Esophagus squamous epithelium (tissue), 5 donors: ENCODE measurements at regions of chr7 and their contacts with region 1.

Region 1: GRCh38 chr7:112550468-112551060 is 69.8 kb downstream of the LSMEM1 start:
- DNase-seq: no peak
- H3K4me3 ChIP-seq: no peak overlapping the region
- H3K27ac ChIP-seq: no peak overlapping the region
- H3K4me1 ChIP-seq: no peaks in the 10 kb centered on the region
- H3K27me3 ChIP-seq: peaks cover 0 to 7% (median 0%) of the 10 kb centered on the region in 4 donors
- CTCF ChIP-seq: peak; percentile 35 to 92 (median 82)
- POLR2A ChIP-seq: no peak

Region 2: GRCh38 chr7:112610636-112611035 is 60.1 kb after region 1 on chr7:
- intact Hi-C with region 1: no loop called
- DNase-seq: no peak
- H3K4me3 ChIP-seq: no peak overlapping the region
- H3K27ac ChIP-seq: no peak overlapping the region
- H3K4me1 ChIP-seq: no peaks in the 10 kb centered on the region
- H3K27me3 ChIP-seq: no peaks in the 10 kb centered on the region
- CTCF ChIP-seq: no peak
- POLR2A ChIP-seq: no peak

Region 3: DNA sequence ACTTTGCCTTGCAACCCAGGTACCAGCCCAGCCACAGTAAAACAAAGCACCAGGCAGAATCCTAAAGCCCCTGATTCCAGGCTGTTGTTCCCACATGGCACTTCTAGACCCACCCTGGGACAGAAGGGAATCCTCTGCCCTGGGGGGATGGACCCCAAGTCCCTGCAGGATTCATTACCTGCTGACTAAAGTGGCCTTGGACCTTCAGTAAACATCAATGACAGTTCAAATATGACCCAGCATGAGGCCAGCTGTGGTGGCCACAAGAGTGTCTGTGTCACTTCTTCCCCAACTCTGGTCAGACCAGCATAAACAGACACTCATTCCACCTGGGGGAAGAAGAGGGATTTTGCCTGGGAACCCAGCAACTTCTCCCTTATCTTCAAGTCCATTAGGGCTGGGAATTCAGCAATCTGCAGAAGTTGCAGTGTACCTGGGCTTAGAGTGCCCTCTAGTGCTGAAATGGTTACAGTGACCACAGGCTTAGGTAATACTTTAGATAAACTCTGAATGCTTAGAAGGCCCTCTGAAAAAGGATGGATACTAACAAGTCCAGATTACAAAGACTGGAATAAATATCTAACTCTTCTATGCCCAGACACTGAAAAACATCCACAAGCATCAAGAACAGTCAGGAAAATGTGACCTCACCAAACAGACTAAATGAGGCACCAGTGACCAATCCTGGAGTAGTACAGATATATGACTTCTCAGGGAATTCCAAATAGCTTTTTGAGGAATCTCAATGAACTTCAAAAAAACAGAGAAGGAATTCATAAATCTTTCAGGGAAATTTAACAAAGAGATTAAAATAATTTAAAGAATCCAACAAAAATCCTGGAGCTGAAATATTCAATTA is 348.1 kb after region 1 on chr7:
- intact Hi-C with region 1: loop called (anchors 10 kb)
- DNase-seq: no peak
- H3K4me3 ChIP-seq: no peak overlapping the region
- H3K27ac ChIP-seq: no peak overlapping the region
- H3K4me1 ChIP-seq: no peaks in the 10 kb centered on the region
- H3K27me3 ChIP-seq: no peaks in the 10 kb centered on the region
- CTCF ChIP-seq: peak in 5 of 6 experiments; percentile 49 to 83 (median 59)
- POLR2A ChIP-seq: no peak

Region 4: GRCh38 chr7:113421696-113422330 is 871.2 kb after region 1 on chr7:
- intact Hi-C with region 1: loop called (anchors 10 kb)
- DNase-seq: peak; percentile 12
- H3K4me3 ChIP-seq: no peak overlapping the region
- H3K27ac ChIP-seq: no peak overlapping the region
- H3K4me1 ChIP-seq: peaks cover 0 to 5% (median 0%) of the 10 kb centered on the region in 3 donors
- H3K27me3 ChIP-seq: no peaks in the 10 kb centered on the region
- CTCF ChIP-seq: peak in 5 of 6 experiments; percentile 70 to 83 (median 78)
- POLR2A ChIP-seq: no peak

Region 5: GRCh38 chr7:113698556-113699220 is 1148.1 kb after region 1 on chr7:
- intact Hi-C with region 1: loop called (anchors 10 kb)
- DNase-seq: no peak
- H3K4me3 ChIP-seq: no peak overlapping the region
- H3K27ac ChIP-seq: no peak overlapping the region
- H3K4me1 ChIP-seq: no peaks in the 10 kb centered on the region
- H3K27me3 ChIP-seq: no peaks in the 10 kb centered on the region
- CTCF ChIP-seq: peak; percentile 11 to 70 (median 42)
- POLR2A ChIP-seq: no peak